ENCODE measurements at regions of chr3 and their contacts with region 1.

Region 1: GRCh38 chr3:163490119-163490518 is 1588.2 kb downstream of the SI start:
- DNase-seq: peak; percentile 87
- H3K4me3 Mint-ChIP-seq: no peak overlapping the region
- H3K27ac Mint-ChIP-seq: no peak overlapping the region
- H3K4me1 Mint-ChIP-seq: no peaks in the 10 kb centered on the region
- H3K27me3 Mint-ChIP-seq: no peaks in the 10 kb centered on the region
- CTCF ChIP-seq: peak; percentile 96

Region 2: DNA sequence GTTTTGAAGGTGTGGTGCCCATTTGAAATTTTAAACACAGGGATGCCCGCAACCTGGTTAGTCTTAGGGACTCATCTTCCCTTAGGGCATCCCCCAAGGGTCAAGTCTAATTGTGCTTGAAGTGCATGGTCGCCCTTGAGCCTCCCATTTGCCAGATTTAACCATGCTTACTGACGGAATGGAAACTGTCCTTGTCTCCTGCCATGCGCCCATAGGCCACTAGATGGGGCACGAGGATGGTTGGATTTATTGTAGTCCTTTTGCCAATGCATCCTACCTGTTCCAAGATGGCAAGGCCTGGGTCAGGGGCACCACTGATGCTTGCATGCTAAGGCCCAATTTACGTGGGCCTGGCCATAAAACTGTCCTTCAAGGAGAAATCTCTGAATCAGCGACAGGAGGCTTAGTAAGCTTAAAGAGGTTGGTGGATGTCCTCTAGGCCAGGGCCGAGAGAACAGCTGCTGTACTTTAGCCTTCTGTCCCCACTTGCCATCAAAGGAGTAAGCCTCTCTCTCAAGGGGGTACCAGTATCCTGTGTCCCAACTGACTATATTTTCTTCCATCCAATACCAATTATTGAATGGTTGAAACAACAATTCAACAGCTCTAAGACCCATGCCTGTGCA is 1638.1 kb before region 1 on chr3:
- CTCF ChIA-PET with region 1: no interaction called
- intact Hi-C with region 1: loop called (anchors 2 kb)
- DNase-seq: peak; percentile 87
- H3K4me3 Mint-ChIP-seq: no peak overlapping the region
- H3K27ac Mint-ChIP-seq: no peak overlapping the region
- H3K4me1 Mint-ChIP-seq: peaks cover 21% of the 10 kb centered on the region
- H3K27me3 Mint-ChIP-seq: no peaks in the 10 kb centered on the region
- CTCF ChIP-seq: peak; percentile 100

Region 3: DNA sequence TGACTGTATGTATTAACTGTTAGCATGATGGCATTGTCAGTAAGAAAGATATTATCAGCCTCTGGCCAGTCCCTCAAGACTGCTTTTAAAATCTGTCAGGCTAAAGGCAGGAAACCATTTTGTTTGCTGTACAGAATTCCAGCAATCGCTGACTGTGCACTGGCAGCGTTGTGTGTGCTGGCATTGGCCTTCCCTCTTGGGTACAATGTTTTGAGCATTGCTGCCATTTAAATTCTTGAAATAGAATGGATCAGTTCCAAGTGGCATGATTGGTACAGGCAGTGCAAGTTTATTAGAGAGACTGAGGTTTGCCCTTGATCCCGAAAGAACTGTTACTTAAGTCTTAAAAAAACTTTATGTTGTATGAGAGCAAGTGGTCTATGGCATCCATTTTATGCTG is 1204.9 kb before region 1 on chr3:
- CTCF ChIA-PET with region 1: no interaction called
- intact Hi-C with region 1: loop called (anchors 5 kb)
- DNase-seq: no peak
- H3K4me3 Mint-ChIP-seq: no peak overlapping the region
- H3K27ac Mint-ChIP-seq: no peak overlapping the region
- H3K4me1 Mint-ChIP-seq: peaks cover 13% of the 10 kb centered on the region
- H3K27me3 Mint-ChIP-seq: no peaks in the 10 kb centered on the region
- CTCF ChIP-seq: no peak

Region 4: GRCh38 chr3:162777111-162777510 is 713.0 kb before region 1 on chr3:
- CTCF ChIA-PET with region 1: no interaction called
- intact Hi-C with region 1: loop called (anchors 1 kb)
- DNase-seq: peak; percentile 17
- H3K4me3 Mint-ChIP-seq: no peak overlapping the region
- H3K27ac Mint-ChIP-seq: no peak overlapping the region
- H3K4me1 Mint-ChIP-seq: no peaks in the 10 kb centered on the region
- H3K27me3 Mint-ChIP-seq: no peaks in the 10 kb centered on the region
- CTCF ChIP-seq: peak; percentile 55

Region 5: GRCh38 chr3:163347944-163348343 is 142.2 kb before region 1 on chr3:
- CTCF ChIA-PET with region 1: no interaction called
- intact Hi-C with region 1: loop called (anchors 5 kb)
- DNase-seq: no peak
- H3K4me3 Mint-ChIP-seq: no peak overlapping the region
- H3K27ac Mint-ChIP-seq: no peak overlapping the region
- H3K4me1 Mint-ChIP-seq: no peaks in the 10 kb centered on the region
- H3K27me3 Mint-ChIP-seq: no peaks in the 10 kb centered on the region
- CTCF ChIP-seq: no peak

Region 6: GRCh38 chr3:163632722-163633121 is 142.6 kb after region 1 on chr3:
- CTCF ChIA-PET with region 1: no interaction called
- intact Hi-C with region 1: no loop called
- DNase-seq: no peak
- H3K4me3 Mint-ChIP-seq: no peak overlapping the region
- H3K27ac Mint-ChIP-seq: no peak overlapping the region
- H3K4me1 Mint-ChIP-seq: no peaks in the 10 kb centered on the region
- H3K27me3 Mint-ChIP-seq: no peaks in the 10 kb centered on the region
- CTCF ChIP-seq: no peak

Measured in Calu3 (cell line).